K562 (cell line): ENCODE measurements at regions of chr12 and their contacts with region 1.

Region 1: DNA sequence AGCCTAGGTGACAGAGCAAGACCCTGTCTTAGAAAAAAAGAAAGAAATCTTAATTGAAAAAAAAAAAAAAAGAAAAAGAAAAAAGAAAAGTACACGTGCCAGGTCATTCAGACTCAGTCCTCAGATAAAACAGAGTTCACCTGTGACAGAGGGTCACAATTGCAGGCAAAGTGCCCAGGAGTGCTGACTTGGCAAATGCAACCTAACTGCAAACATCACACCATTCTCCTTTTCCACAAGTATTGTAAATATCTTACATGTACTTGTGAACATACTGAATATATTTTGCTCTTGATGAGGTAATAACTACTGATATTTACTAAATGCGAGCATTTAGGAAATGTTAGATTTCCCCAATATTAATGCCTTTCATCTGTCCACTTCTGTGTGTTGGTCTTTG is 9.0 kb upstream of the COL2A1 start:
- DNase-seq: no peak
- ATAC-seq: no peak
- H3K4me3 ChIP-seq: no peak overlapping the region
- H3K27ac ChIP-seq: no peak overlapping the region
- H3K4me1 ChIP-seq: no peaks in the 10 kb centered on the region
- H3K27me3 ChIP-seq: peaks cover 66 to 67% of the 10 kb centered on the region in 2 experiments
- CTCF ChIP-seq: no peak
- EP300 ChIP-seq: no peak
- POLR2A ChIP-seq: no peak
- RAD21 ChIP-seq: no peak

Region 2: DNA sequence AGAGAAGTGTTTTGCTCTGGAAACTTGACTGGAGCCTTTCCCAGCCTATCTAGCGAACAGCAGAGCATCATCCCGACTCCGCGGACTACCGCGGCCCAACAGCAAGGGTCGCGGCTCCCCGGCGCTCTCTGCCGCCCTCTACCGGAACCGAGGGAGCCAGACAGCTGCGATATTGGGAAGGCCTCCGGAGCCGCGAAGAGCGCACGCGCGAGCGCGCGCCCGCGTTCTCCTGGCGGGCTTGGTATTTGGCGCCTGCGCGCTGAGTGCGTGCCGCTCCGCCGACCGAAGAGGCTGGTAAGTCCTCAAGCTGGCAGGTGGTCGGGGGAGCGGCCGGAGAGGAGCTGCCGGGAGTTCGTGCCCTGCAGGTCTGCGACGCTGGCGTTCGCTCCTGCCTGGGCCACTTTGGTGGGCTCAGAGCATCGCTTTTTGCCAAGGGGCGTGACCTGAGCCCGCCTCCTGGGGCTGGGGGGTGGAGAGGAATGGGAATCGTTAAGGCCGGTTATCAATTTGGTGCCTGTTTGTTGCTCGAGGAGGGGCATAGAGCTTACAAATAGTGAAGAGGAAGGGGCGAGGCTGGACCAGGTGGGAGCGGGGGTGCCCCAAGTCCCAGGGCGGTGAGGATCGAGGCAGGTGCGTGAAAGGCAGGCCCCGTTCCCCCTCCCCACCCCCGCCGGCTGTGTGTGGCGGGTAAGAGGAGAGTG is 49.8 kb before region 1 on chr12 and contains the start of gene TMEM106C:
- CTCF ChIA-PET with region 1: no interaction called
- POLR2A ChIA-PET with region 1: no interaction called
- in situ Hi-C with region 1: no loop called
- intact Hi-C with region 1: loop called (anchors 5 kb)
- DNase-seq: peak; percentile 94 to 98 (median 98)
- ATAC-seq: peak; percentile 99
- H3K4me3 ChIP-seq: peak within 1 kb of the TSS; percentile 84
- H3K27ac ChIP-seq: no peak within 1 kb of the TSS; the same call in 1 of the 3 replicates
- H3K4me1 ChIP-seq: peaks cover 6 to 11% of the 10 kb centered on the region in 2 experiments; a peak in 4 of 5 replicates
- H3K27me3 ChIP-seq: peaks cover 14 to 27% of the 10 kb centered on the region in 2 experiments
- CTCF ChIP-seq: peak; percentile 97 to 98 (median 97)
- EP300 ChIP-seq: no peak
- POLR2A ChIP-seq: no peak
- RAD21 ChIP-seq: peak; percentile 43 to 76
- polyA plus RNA-seq, gene TMEM106C: 134 to 158 TPM

Region 3: DNA sequence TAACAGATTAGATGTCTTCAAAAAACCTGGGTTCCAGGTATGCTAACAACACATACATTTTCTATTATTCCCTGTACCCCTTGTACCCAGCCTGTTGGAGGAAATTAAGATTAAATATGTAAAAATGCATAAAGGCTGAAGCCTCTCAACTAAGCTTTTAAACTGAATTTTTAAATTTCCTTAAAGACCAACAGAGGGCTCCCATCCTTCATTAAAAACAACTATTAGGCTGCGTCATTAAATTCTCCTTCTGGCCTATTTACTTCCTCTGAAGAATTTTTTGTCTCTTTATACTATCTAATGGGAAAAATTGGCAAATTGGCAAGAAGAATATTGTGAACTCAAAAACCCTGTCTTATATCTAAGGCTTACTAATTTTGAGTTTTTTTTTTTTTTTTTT is 70.8 kb after region 1 on chr12:
- CTCF ChIA-PET with region 1: no interaction called
- POLR2A ChIA-PET with region 1: no interaction called
- in situ Hi-C with region 1: no loop called
- intact Hi-C with region 1: no loop called
- DNase-seq: peak in 1 of 4 experiments; percentile 9
- ATAC-seq: no peak; the same call in 2 of the 3 replicates
- H3K4me3 ChIP-seq: no peak overlapping the region
- H3K27ac ChIP-seq: no peak overlapping the region
- H3K4me1 ChIP-seq: no peaks in the 10 kb centered on the region
- H3K27me3 ChIP-seq: no peaks in the 10 kb centered on the region
- CTCF ChIP-seq: peak in 1 of 3 experiments; percentile 45; a peak in 3 of 6 replicates
- EP300 ChIP-seq: no peak
- POLR2A ChIP-seq: no peak
- RAD21 ChIP-seq: peak in 1 of 2 experiments; percentile 52; a peak in 3 of 4 replicates